Endothelial cell of umbilical vein (primary cell): ENCODE measurements at regions of chr18 and their contacts with region 1.

Region 1: DNA sequence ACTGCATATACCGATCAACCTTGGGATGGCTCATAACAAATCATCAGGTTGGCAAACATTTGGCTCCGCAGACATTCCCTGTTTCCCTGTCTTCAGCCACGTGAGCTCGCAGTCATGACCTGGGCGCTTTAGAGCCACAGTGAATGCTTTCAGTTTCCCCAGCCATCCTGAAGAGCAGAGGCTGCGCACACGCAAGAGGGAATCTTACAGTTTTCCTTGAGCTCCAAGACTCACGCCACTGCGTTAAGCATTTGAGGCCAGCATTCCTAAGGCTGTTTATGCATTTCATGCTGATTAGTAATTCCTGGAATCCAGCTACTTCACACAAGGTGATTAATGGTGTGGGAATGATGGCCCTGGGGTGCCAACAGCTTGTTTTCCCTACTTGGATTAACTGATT is 95.1 kb downstream of the MTCL1 start:
- DNase-seq: peak; percentile 24
- H3K4me3 ChIP-seq: no peak overlapping the region
- H3K27ac ChIP-seq: peak overlapping the region; percentile 94
- H3K4me1 ChIP-seq: peaks cover 46% of the 10 kb centered on the region
- H3K27me3 ChIP-seq: no peaks in the 10 kb centered on the region
- CTCF ChIP-seq: no peak
- POLR2A ChIP-seq: no peak

Region 2: DNA sequence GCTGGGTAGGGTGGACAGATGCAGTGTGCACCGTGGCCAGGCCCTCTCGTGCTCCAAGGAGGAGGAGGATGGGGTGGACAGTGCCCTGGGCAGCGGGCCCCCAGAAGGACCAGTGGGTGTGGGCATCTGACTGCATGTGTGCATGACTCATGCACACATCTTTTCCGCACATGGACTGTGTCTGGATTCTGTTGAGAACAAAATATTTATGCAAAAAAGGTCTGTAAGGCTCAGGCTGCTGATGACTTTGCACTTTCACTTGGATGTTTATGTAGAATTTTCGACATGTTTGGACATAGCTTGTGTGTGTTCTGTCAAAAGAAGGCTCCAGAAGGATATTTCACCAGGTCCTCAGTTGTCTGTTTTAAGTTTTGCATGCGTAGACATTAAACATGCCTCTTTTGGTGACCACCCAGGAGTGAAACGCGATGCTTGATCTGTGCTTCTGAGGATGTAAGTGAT is 49.5 kb before region 1 on chr18:
- CTCF ChIA-PET with region 1: no interaction called
- POLR2A ChIA-PET with region 1: no interaction called
- dilution Hi-C with region 1: no loop called
- intact Hi-C with region 1: loop called (anchors 5 kb)
- DNase-seq: peak; percentile 81
- H3K4me3 ChIP-seq: no peak overlapping the region
- H3K27ac ChIP-seq: peak overlapping the region; percentile 50
- H3K4me1 ChIP-seq: peaks cover 39% of the 10 kb centered on the region
- H3K27me3 ChIP-seq: no peaks in the 10 kb centered on the region
- CTCF ChIP-seq: no peak
- POLR2A ChIP-seq: no peak

Region 3: GRCh38 chr18:8890957-8891464 is 90.6 kb after region 1 on chr18:
- CTCF ChIA-PET with region 1: no interaction called
- POLR2A ChIA-PET with region 1: no interaction called
- dilution Hi-C with region 1: no loop called
- intact Hi-C with region 1: loop called (anchors 2 kb)
- DNase-seq: peak; percentile 83
- H3K4me3 ChIP-seq: no peak overlapping the region
- H3K27ac ChIP-seq: peak overlapping the region; percentile 67
- H3K4me1 ChIP-seq: peaks cover 21% of the 10 kb centered on the region
- H3K27me3 ChIP-seq: no peaks in the 10 kb centered on the region
- CTCF ChIP-seq: no peak
- POLR2A ChIP-seq: no peak